PC-9 (cell line): ENCODE measurements at regions of chr15 and their contacts with region 1.

Region 1: DNA sequence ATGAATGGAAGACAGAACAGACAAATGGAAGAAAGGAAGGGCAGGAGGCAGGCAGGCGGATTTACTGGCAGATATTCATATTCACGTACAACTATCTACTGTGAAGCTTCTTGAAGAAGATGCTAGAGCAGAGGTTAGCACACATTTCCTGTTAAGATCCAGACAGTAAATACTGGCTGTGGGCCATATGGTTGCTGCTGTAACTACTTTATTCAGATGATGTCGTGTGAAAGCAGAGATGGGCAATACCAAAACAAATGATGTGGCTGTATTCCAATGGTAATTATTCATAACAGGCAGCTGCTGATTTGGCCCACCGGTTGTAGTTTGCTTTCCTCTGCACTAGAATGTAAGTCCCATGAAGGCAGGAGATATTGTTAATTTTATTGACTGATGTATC is 115.7 kb upstream of the PRTG start:
- DNase-seq: no peak
- H3K4me3 ChIP-seq: no peak overlapping the region
- H3K27ac ChIP-seq: no peak overlapping the region
- H3K4me1 ChIP-seq: no peaks in the 10 kb centered on the region
- H3K27me3 ChIP-seq: no peaks in the 10 kb centered on the region
- CTCF ChIP-seq: no peak

Region 2: DNA sequence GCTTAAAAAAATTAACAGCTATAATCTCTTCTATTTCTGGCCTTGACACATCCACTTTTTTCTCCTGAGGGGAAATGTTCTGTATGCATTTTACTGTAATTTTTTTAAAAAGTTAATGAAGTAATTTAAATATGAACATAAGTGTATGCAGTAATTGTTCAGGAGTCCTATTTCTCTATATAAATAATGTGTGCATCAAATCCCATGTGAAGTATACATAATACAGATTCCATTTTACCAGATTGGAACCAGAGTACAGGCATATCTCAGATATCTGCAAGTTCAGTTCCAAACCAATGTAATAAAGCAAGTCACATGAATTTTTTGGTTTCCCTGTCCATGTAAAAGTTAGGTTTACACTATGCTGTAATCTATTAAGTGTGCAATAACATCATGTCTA is 477.1 kb before region 1 on chr15:
- CTCF ChIA-PET with region 1: no interaction called
- POLR2A ChIA-PET with region 1: no interaction called
- intact Hi-C with region 1: no loop called
- DNase-seq: no peak
- H3K4me3 ChIP-seq: no peak overlapping the region
- H3K27ac ChIP-seq: no peak overlapping the region
- H3K4me1 ChIP-seq: no peaks in the 10 kb centered on the region
- H3K27me3 ChIP-seq: no peaks in the 10 kb centered on the region
- CTCF ChIP-seq: no peak

Region 3: GRCh38 chr15:56058986-56059385 is 200.3 kb after region 1 on chr15:
- CTCF ChIA-PET with region 1: no interaction called
- POLR2A ChIA-PET with region 1: interaction called, 11 read pairs
- intact Hi-C with region 1: no loop called
- DNase-seq: no peak
- H3K4me3 ChIP-seq: no peak overlapping the region
- H3K27ac ChIP-seq: peak overlapping the region; percentile 84; the same call in 1 of the 2 replicates
- H3K4me1 ChIP-seq: peaks cover 28% of the 10 kb centered on the region
- H3K27me3 ChIP-seq: no peaks in the 10 kb centered on the region
- CTCF ChIP-seq: no peak